ENCODE measurements at regions of chrX and their contacts with region 1.

Region 1: DNA sequence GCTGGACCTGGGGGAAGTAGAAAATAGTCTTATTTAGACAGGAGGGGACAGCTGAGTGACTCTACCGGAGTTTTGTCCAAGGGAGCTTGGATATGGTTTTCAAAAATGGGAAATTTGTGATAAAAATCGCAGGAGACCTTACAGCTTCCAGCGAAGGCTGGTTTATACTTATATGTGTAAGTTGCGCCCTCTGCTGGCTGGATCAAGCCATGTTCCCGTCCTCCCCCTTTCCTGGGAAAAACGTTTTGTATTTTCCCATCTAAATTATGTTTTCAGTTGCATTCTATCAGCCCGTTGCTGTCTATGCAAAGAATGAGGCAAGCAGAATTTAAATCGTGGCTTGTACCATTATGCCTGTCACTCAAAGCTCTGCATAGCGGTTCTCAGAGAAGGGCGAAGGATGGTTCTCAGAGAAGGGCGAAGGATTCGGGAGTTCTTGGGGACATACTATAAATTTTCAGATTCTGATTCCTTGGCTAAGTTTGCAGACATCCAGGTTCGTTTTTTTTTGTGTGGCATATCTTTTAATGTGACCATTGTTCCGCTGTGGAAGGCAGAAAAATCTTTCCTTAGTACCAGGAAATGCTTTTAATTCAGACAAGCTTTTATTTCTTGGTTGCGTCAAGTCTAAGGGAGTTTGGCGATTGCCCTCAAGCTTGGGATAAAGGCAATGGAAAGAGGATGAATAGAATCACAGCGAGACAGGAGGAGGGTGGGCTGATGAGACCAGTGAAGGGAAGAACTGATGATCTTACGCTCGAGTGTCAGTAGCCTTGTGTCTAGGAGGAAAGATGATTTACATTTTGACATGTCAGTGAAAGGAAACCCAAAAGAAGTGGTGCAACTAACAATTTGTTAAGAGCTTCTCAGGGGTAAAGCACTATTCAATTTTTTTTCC is 128.5 kb upstream of the ARX start:
- DNase-seq: peak in 4 of 5 donors; percentile 19 to 33 (median 21)
- H3K4me3 ChIP-seq: no peak overlapping the region
- H3K4me3 Mint-ChIP-seq: peak overlapping the region in 3 of 8 donors; percentile 7 to 48 (median 13)
- H3K27ac ChIP-seq: no peak overlapping the region
- H3K27ac Mint-ChIP-seq: no peak overlapping the region
- H3K4me1 ChIP-seq: no peaks in the 10 kb centered on the region
- H3K4me1 Mint-ChIP-seq: peaks cover 0 to 6% (median 5%) of the 10 kb centered on the region in 4 donors
- H3K27me3 ChIP-seq: no peaks in the 10 kb centered on the region
- H3K27me3 Mint-ChIP-seq: peaks cover 4% of the 10 kb centered on the region in 2 donors

Region 2: GRCh38 chrX:24259544-24260240 is 884.6 kb before region 1 on chrX:
- CTCF ChIA-PET with region 1: no interaction called
- POLR2A ChIA-PET with region 1: no interaction called
- intact Hi-C with region 1: loop called (anchors 5 kb)
- DNase-seq: peak in 3 of 5 donors; percentile 3 to 15 (median 12)
- H3K4me3 ChIP-seq: no peak overlapping the region
- H3K4me3 Mint-ChIP-seq: no peak overlapping the region
- H3K27ac ChIP-seq: no peak overlapping the region
- H3K27ac Mint-ChIP-seq: no peak overlapping the region
- H3K4me1 ChIP-seq: peaks cover 6% of the 10 kb centered on the region
- H3K4me1 Mint-ChIP-seq: peaks cover 6 to 10% (median 8%) of the 10 kb centered on the region in 4 donors
- H3K27me3 ChIP-seq: no peaks in the 10 kb centered on the region
- H3K27me3 Mint-ChIP-seq: no peaks in the 10 kb centered on the region

Region 3: DNA sequence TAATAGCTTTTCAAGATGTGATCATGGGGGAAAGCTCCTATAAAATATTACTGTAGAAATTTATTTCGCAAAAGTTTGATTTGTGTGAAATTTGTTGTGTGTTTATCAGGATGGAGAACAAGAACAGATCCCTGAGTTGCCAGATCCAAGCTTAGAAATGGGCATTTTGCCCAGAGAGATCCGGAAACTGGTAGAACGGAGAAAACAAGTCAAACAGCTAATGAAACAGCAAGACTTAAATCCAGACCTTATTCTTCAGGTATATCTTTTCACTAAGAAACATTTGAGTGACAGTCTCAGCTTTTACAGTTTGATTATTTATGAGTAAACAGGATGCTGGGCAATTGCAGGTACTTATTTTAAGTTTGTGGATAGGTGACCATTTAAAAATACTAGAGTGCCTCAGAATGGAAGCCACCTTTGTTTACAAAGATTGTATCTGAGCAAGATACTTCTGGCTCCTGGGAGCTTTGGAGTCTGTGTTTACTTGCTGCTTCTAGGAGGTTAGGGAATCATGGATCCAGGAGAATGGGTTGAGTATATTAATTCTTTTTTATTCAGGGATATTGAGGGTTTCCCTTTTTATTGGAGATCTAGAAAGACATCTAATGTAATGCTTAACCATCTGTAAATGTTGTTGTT is 396.0 kb before region 1 on chrX:
- CTCF ChIA-PET with region 1: interaction called, 20 read pairs
- POLR2A ChIA-PET with region 1: no interaction called
- intact Hi-C with region 1: no loop called
- DNase-seq: no peak
- H3K4me3 ChIP-seq: no peak overlapping the region
- H3K4me3 Mint-ChIP-seq: no peak overlapping the region
- H3K27ac ChIP-seq: no peak overlapping the region
- H3K27ac Mint-ChIP-seq: no peak overlapping the region
- H3K4me1 ChIP-seq: no peaks in the 10 kb centered on the region
- H3K4me1 Mint-ChIP-seq: no peaks in the 10 kb centered on the region
- H3K27me3 ChIP-seq: no peaks in the 10 kb centered on the region
- H3K27me3 Mint-ChIP-seq: no peaks in the 10 kb centered on the region

Region 4: GRCh38 chrX:24838629-24839028 is 305.7 kb before region 1 on chrX:
- CTCF ChIA-PET with region 1: interaction called, 81 read pairs
- POLR2A ChIA-PET with region 1: no interaction called
- intact Hi-C with region 1: no loop called
- DNase-seq: peak in 4 of 5 donors; percentile 19 to 25 (median 20)
- H3K4me3 ChIP-seq: no peak overlapping the region
- H3K4me3 Mint-ChIP-seq: no peak overlapping the region
- H3K27ac ChIP-seq: no peak overlapping the region
- H3K27ac Mint-ChIP-seq: no peak overlapping the region
- H3K4me1 ChIP-seq: no peaks in the 10 kb centered on the region
- H3K4me1 Mint-ChIP-seq: no peaks in the 10 kb centered on the region
- H3K27me3 ChIP-seq: no peaks in the 10 kb centered on the region
- H3K27me3 Mint-ChIP-seq: no peaks in the 10 kb centered on the region

Region 5: GRCh38 chrX:25226151-25226550 is 81.9 kb after region 1 on chrX:
- CTCF ChIA-PET with region 1: no interaction called
- POLR2A ChIA-PET with region 1: no interaction called
- intact Hi-C with region 1: no loop called
- DNase-seq: no peak
- H3K4me3 ChIP-seq: no peak overlapping the region
- H3K4me3 Mint-ChIP-seq: no peak overlapping the region
- H3K27ac ChIP-seq: no peak overlapping the region
- H3K27ac Mint-ChIP-seq: no peak overlapping the region
- H3K4me1 ChIP-seq: no peaks in the 10 kb centered on the region
- H3K4me1 Mint-ChIP-seq: no peaks in the 10 kb centered on the region
- H3K27me3 ChIP-seq: no peaks in the 10 kb centered on the region
- H3K27me3 Mint-ChIP-seq: no peaks in the 10 kb centered on the region